ENCODE measurements at regions of chr17 and their contacts with region 1.

Region 1: GRCh38 chr17:39364626-39365025 is 36.8 kb downstream of the FBXL20 start:
- H3K4me3 Mint-ChIP-seq: no peak overlapping the region
- H3K27ac Mint-ChIP-seq: peak overlapping the region; percentile 77
- H3K4me1 Mint-ChIP-seq: peaks cover 41% of the 10 kb centered on the region
- H3K27me3 Mint-ChIP-seq: no peaks in the 10 kb centered on the region

Region 2: DNA sequence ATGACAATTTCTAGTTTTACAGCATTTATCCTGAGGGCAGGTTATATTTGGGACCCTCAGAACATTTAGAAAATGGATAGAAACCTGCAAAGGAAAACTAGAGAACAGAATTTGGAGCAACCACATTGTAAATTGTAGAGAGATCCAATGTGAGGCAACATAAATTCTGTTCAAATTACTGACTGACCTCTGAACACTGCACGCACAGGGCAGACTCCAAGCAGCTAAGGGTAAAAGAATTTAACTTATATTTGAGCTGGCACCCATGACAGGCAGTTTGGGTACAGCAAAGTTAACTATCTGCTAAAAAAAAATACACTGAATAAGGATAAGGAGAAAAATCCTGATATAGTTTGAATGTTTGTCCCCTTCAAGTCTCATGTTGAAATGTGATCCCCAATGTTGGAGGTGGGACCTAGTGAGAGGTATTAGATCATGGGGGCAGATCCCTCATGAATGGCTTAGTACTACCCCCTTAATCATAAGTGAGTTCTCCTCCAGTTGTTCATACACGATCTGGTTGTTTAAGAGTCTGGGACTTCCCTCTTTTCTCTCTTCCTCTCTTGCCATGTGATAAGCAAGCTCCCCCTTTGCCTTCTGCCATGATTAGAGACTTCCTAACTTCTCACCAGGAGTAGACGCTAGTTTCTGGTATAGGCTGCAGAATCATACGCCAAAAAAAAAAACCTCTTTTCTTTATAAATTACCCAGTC is 38.9 kb before region 1 on chr17:
- intact Hi-C with region 1: loop called (anchors 5 kb)
- H3K4me3 Mint-ChIP-seq: peak overlapping the region; percentile 39
- H3K27ac Mint-ChIP-seq: peak overlapping the region; percentile 74
- H3K4me1 Mint-ChIP-seq: peaks cover 29% of the 10 kb centered on the region
- H3K27me3 Mint-ChIP-seq: no peaks in the 10 kb centered on the region

Region 3: DNA sequence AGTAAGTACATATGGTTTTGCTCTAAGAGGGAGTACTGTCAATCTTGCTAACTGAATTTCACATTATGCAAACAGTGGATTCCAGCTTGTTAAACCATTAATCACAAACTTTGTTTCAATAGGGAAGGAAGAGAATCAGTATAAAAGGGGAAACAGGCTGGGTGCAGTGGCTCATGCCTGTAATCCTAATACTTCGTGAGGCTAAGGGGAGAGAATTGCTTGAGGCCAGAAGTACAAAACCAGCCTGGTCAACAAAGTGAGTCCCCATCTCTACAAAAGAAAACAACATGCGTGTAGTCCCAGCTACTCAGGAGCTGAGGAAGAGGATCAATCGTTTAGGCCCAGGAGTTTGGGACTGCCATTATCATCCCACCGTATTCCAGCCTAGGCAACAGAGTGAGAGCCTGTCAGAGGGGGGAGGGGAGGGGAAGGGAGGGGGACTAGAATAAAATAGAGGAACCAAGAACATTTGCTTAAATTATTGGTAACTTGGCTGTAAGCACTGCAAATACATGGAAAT is 28.9 kb before region 1 on chr17:
- intact Hi-C with region 1: no loop called
- H3K4me3 Mint-ChIP-seq: peak overlapping the region; percentile 75
- H3K27ac Mint-ChIP-seq: peak overlapping the region; percentile 95
- H3K4me1 Mint-ChIP-seq: peaks cover 42% of the 10 kb centered on the region
- H3K27me3 Mint-ChIP-seq: no peaks in the 10 kb centered on the region

Measured in dendritic cell treated with granulocyte-macrophage colony-stimulating factor and Interleukin-4, amounts not matched to agents 40 ng/mL and 50 ng/mL, for 4 days (primary cell).